G401 (cell line): ENCODE measurements at regions of chr1 and their contacts with region 1.

Region 1: DNA sequence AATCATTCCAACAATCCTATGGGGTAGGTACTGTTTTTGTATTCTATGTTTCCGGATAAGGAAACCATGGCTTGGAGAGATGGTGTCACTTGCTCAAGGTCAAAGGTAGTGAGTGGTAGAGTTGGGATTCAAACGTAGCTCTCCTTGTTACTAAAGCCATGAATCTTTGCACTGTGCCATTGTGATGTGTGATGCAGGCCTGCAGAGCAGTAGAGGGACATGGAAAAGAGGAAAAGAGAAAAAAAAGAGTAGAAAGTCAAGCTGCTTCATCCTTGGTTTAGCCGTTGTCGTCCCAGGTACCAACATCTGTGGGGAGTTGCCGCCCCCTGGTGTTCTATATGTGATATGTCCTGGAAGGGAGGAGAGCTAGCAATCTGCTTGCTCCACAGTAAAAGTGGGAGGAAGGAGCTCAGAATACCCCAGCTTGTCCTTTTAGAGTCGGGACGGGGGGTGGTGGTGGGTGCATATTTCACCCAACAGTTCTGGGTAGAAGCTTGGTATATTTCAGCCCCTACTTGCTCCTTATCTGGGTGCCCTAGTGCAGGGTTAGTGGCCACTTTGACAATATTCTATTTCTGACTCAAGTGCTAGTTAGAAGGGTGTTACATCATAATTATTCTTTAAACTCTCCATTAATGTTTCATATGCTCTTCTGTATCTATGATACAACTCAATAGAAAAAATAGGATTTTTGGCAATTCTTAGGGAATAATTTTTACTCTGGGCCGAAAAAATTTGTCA is 98.4 kb downstream of the EBNA1BP2 start:
- DNase-seq: peak; percentile 86

Region 2: DNA sequence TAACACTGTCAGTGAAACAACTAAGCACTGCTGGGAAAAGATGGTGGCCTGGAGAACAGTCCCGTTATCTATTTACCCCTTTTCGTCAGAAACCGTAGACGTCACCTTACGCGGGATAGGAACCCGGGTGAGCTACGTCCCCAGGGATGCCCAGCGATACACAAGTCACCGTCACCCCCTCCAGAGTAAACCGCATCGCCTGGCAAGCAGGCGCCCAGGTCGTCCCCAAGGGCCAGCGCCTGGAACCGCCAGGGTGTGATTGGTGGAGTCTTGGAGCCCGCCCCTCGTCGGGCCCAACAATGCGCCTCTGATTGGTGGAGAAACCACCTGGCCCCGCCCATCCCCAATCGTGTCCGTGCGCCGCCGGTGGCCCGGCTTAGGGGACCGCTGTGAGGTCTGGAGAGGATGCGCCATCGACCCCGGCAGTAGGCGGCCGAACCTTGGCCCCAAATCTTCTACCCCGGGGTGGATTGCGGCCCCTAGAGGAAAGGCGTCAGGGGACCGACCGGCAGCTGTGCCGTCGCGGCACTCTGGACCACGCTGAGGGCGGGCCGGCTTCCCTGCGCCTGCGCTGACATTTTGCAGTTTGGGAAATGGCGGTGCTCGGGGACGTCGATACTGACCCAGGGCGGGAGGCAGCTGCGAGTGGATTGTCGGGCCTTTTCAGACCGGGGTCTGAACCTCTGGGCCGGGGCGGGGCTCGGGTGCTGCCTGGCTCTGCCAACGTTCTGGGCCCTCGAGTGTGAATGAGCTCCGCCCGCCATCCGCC is 149.4 kb before region 1 on chr1:
- in situ Hi-C with region 1: loop called (anchors 25 kb)
- DNase-seq: peak; percentile 97

Region 3: GRCh38 chr1:43293896-43294760 is 220.5 kb after region 1 on chr1:
- in situ Hi-C with region 1: no loop called
- DNase-seq: no peak